Natural killer cell (primary cell): ENCODE measurements at regions of chr1 and their contacts with region 1.

Region 1: GRCh38 chr1:107820805-107821204 is 144.2 kb downstream of the VAV3 start:
- DNase-seq: no peak
- ATAC-seq: peak in 2 of 3 donors; percentile 57 to 61
- H3K4me3 ChIP-seq: no peak overlapping the region
- H3K4me3 Mint-ChIP-seq: peak overlapping the region; percentile 36
- H3K27ac ChIP-seq: peak overlapping the region; percentile 31
- H3K27ac Mint-ChIP-seq: peak overlapping the region; percentile 81 to 90
- H3K4me1 ChIP-seq: peaks cover 16% of the 10 kb centered on the region
- H3K4me1 Mint-ChIP-seq: peaks cover 67 to 68% of the 10 kb centered on the region in 2 donors
- H3K27me3 ChIP-seq: no peaks in the 10 kb centered on the region
- H3K27me3 Mint-ChIP-seq: no peaks in the 10 kb centered on the region
- CTCF ChIP-seq: no peak

Region 2: GRCh38 chr1:107840725-107841124 is 19.9 kb after region 1 on chr1:
- intact Hi-C with region 1: loop called (anchors 1 kb)
- DNase-seq: peak in 1 of 2 donors; percentile 46
- ATAC-seq: peak; percentile 53 to 70 (median 53)
- H3K4me3 ChIP-seq: peak overlapping the region; percentile 13
- H3K4me3 Mint-ChIP-seq: peak overlapping the region; percentile 75
- H3K27ac ChIP-seq: peak overlapping the region; percentile 82
- H3K27ac Mint-ChIP-seq: peak overlapping the region; percentile 87 to 89
- H3K4me1 ChIP-seq: peaks cover 31% of the 10 kb centered on the region
- H3K4me1 Mint-ChIP-seq: peaks cover 93 to 96% of the 10 kb centered on the region in 2 donors
- H3K27me3 ChIP-seq: no peaks in the 10 kb centered on the region
- H3K27me3 Mint-ChIP-seq: no peaks in the 10 kb centered on the region
- CTCF ChIP-seq: no peak